A673 (cell line): ENCODE measurements at regions of chr17 and their contacts with region 1.

Region 1: DNA sequence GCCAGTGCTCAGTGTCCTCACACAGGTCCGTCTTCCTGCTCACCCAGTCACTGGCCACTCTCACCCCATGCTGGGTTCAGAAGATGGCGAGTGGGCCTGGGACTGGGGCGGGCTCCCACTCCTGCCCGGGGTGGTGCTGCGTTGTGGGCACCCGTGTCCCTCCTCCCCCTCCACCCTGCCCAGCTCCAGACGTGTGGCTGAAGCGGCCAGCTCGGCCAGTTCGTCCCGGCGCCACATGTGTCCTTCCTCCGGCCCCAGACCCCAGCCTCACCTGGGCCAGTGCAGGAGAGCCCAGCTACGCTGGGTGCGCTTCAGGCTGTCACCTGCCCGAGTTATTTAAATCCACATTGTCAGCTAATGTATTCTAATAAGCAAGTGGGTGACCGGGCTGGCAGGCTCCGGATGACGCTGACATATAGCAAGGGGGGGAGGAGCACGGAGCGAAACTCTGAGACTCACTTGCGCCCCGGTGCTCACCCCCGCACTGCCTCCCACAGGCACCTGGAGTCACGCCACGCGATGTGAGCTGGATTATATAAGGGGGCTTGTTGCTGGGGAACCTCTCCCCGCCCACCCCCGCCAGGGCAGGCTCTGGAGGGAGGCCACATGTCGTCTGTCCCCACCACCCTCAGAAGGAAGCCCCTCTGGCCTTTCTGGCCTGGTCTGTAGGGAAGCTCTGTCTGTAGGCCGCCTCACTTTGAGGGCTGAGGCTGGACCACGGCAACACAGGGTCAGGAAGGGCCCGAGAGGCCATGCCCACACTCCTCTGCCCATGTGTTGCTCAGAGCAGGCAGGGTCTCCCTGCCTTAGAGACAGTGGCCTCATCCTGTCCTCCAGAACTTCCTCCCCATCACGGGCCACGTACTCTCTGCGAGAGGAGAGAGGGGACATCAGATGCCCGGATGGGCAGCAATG is 7.1 kb upstream of the BAIAP2 start:
- DNase-seq: no peak
- H3K4me3 ChIP-seq: no peak overlapping the region
- H3K27ac ChIP-seq: no peak overlapping the region
- H3K4me1 ChIP-seq: peaks cover 23% of the 10 kb centered on the region
- H3K27me3 ChIP-seq: no peaks in the 10 kb centered on the region
- CTCF ChIP-seq: no peak

Region 2: DNA sequence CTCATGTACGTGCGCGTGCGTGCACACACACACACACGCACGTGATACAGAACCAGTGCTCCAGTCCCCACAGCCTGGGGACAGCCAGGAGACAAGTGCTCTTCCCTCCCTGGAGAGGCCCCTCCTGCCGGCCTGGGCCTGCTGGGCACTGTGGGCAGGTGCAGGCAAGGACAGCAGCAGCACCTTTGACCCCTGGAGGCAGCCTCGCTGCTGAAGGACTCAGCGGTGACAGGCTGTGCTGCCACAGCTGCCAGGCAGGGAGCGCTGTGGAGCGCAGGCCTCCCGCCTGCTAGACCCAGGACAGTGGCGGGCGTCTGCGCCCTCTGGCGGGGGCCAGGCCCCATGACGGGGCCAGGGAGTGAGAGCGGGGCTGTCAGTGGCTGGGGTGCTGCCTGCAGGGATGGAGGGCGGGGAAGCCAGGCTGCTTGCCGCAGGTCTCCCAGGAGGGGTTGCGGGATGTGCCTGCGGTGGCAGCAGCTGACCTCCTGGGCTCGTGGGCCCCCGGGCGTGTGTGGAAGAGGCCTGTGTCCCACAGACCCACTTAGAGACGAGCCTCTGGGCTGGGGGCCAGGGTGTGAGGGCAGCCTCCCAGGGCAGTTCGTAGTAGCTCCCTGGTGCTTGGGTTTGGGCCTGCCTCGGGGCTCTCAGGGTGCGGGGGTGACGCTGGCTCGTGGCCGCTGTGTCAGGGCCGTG is 73.9 kb after region 1 on chr17:
- CTCF ChIA-PET with region 1: interaction called, 15 read pairs
- POLR2A ChIA-PET with region 1: no interaction called
- intact Hi-C with region 1: loop called (anchors 2 kb)
- DNase-seq: peak; percentile 83
- H3K4me3 ChIP-seq: no peak overlapping the region
- H3K27ac ChIP-seq: no peak overlapping the region
- H3K4me1 ChIP-seq: peaks cover 15% of the 10 kb centered on the region
- H3K27me3 ChIP-seq: no peaks in the 10 kb centered on the region
- CTCF ChIP-seq: peak; percentile 100